Calu3 (cell line): ENCODE measurements at regions of chr7 and their contacts with region 1.

Region 1: DNA sequence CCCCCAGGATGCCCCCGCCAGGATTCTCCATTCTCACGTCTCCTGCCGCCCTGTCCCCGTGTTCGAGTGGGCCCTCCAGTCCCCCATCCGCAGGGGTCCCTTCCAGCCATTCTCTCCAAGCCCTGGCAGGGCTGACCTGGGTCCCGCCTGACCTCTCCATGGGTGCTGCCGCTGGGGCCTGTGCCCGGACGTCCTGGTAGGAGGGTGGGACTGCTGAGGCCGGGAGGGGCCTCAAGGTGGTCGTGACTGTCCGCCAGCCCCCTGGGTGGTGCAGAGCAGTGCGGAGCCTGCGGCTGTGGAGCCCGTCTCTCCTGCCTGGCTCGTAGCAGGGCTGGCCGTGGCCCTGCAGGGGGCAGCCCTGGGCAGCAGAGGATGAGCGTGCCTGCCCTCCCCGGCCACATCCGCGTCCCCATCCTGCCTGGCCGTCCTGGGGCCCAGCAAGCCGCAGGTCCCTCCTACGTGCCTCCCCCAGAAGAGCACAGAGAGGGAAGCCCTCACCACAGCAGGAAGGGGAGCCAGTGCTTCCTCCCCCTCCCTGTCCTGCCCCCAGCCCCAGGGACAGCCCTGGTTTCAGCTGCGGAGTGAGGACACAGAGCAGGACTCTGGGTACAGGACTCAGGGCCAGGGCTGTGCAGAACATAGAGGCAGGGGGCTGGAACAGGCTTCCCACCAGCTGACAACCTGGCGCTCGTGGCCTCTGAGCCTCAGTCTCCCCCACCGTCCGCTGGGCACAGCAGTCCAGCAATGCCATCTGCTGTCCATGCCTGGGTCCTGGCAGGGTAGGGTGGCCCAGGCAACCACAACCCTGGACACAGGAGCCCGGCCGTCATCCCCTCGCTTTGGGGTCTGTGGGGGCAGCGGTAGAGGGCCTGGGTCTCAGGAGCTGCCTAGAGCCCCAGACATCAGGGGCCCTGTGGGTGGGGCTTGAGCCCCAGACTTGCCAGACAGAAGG is 1.5 kb upstream of the GRIFIN start:
- DNase-seq: peak; percentile 92
- H3K4me3 Mint-ChIP-seq: no peak overlapping the region
- H3K27ac Mint-ChIP-seq: no peak overlapping the region
- H3K4me1 Mint-ChIP-seq: peaks cover 10% of the 10 kb centered on the region
- H3K27me3 Mint-ChIP-seq: peaks cover 44% of the 10 kb centered on the region
- CTCF ChIP-seq: peak; percentile 93

Region 2: DNA sequence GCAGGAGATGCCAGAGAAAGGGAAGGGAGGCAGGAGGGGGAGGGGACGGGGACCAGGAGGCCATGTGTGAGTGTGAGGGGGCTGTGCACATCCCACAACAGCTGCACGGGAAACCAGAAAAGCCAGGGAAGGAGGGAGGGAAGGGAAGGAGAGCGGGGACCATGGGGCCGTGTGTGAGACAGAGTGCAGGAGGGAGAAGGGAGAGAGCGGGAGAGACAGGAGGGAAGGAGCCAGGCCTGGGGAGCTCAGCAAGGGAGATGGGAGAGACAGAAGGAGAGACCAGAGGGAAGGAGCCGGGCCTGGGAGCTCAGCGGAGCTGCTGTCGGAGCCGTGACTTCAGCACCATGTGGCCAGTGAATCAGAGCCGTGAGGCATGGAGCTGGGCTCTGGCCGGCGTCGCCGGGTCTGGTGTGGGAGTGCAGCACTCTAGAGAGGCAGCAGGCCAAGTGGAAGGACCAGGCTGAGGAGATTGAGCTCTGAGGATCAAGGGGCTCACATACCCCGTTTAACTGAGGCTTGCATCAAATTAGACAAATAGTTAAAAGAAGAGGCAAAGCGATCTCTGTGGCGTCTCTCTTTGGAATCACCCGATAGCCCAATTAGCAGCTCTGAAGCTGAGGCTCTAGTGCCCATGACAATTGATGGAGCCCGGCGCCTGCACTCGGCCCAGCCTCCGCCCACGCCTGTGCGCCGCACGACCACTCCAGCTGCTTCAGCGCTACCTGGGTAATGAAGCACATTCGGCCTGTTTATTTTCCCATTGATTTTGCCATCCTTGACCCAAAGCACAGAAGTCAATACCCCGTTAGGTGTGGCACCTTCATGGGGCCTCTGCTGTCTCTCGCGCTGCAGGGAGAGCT is 395.4 kb before region 1 on chr7:
- CTCF ChIA-PET with region 1: no interaction called
- intact Hi-C with region 1: no loop called
- DNase-seq: no peak
- H3K4me3 Mint-ChIP-seq: no peak overlapping the region
- H3K27ac Mint-ChIP-seq: no peak overlapping the region
- H3K4me1 Mint-ChIP-seq: no peaks in the 10 kb centered on the region
- H3K27me3 Mint-ChIP-seq: no peaks in the 10 kb centered on the region
- CTCF ChIP-seq: no peak

Region 3: DNA sequence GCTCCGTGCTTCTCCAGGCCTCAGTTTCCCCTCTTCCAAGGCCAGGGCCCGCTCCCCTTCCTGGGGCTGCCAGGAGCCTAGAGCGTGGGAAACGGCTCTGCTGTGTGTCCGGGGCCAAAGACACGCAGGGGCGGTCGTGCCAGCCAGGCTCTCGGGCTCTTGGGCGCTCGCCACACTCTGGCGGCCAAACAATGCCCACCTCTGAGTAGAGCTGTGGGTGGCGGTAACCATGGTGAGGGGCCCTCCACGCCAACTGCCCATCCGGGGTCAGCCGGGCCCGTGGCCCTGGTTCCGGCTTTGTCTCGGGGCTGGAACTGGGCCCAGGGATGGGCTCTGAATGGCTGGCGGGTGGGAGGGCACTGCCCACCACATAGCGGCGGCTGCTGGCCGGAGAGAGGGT is 17.5 kb before region 1 on chr7:
- CTCF ChIA-PET with region 1: interaction called, 10 read pairs
- intact Hi-C with region 1: loop called (anchors 1 kb)
- DNase-seq: no peak
- H3K4me3 Mint-ChIP-seq: no peak overlapping the region
- H3K27ac Mint-ChIP-seq: no peak overlapping the region
- H3K4me1 Mint-ChIP-seq: no peaks in the 10 kb centered on the region
- H3K27me3 Mint-ChIP-seq: peaks cover 9% of the 10 kb centered on the region
- CTCF ChIP-seq: no peak

Region 4: DNA sequence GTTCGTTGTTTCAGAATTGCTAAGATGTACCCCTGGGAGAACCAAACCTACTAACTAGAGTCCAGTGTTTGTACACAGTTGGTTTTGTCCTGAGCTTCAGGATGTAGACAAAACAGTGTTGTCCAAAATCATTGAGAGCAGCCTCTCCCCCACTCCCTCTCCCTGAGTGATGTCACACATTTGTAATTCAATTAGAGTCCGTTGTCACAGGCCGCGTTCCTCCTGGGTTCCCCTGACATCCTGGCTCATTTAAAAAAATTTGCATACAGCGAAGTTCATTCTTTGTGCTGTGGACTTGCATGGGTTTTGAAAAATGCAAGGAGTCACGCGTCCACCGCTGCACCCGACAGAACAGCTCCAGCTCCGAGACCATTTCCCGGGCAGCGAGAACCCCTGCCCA is 11.8 kb before region 1 on chr7:
- CTCF ChIA-PET with region 1: interaction called, 10 read pairs
- intact Hi-C with region 1: loop called (anchors 1 kb)
- DNase-seq: no peak
- H3K4me3 Mint-ChIP-seq: no peak overlapping the region
- H3K27ac Mint-ChIP-seq: no peak overlapping the region
- H3K4me1 Mint-ChIP-seq: peaks cover 18% of the 10 kb centered on the region
- H3K27me3 Mint-ChIP-seq: peaks cover 30% of the 10 kb centered on the region
- CTCF ChIP-seq: no peak

Region 5: DNA sequence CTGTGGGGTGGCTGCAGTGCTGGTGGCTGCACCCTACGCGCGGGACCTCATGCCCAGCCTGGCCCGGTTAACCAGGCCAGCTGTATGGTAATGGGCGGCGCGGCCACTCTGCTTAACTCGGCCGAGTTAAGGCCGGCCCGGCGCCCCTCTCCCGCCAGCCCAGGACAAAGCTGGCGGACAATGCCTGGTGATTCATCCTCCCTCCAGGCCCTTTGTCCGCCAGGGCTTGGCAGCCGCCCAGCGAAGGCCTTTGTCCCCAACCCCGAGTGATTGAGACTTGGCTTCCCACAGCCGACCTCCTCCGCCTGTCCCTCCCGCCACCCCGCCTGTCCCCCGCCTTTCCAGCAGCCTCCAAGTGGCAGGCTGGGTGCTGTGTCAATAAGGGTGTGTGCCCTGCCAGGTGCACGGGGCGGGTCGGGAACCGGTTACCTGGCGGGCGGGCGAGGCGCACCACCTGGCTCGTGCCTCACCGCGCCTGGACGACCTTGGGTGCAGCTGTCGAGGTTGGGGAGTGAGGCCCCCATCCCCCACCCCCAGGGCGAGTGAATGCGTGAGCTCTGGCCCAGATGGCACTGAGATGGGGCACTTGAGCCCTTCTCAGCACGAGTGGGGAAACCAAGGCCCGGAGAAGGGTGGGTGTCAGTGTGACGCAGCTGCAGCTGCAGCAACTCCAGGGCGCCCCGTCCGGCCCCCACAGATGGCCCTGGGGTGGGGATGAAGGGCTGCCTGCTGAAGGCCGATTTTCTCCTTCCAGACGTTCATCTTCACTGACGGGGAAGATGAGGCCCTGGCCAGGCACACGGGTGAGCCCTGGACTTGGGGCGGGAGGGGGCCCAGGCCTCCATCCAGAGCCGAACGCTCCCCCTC is 46.5 kb after region 1 on chr7:
- CTCF ChIA-PET with region 1: interaction called, 7 read pairs
- intact Hi-C with region 1: loop called (anchors 5 kb)
- DNase-seq: peak; percentile 99
- H3K4me3 Mint-ChIP-seq: peak overlapping the region; percentile 99
- H3K27ac Mint-ChIP-seq: peak overlapping the region; percentile 77
- H3K4me1 Mint-ChIP-seq: peaks cover 46% of the 10 kb centered on the region
- H3K27me3 Mint-ChIP-seq: no peaks in the 10 kb centered on the region
- CTCF ChIP-seq: no peak

Region 6: GRCh38 chr7:2555121-2556052 is 77.7 kb after region 1 on chr7 and contains the start of gene BRAT1:
- CTCF ChIA-PET with region 1: interaction called, 3 read pairs
- intact Hi-C with region 1: loop called (anchors 5 kb)
- DNase-seq: peak; percentile 99
- H3K4me3 Mint-ChIP-seq: peak within 1 kb of the TSS; percentile 93
- H3K27ac Mint-ChIP-seq: peak within 1 kb of the TSS; percentile 93
- H3K4me1 Mint-ChIP-seq: peaks cover 38% of the 10 kb centered on the region
- H3K27me3 Mint-ChIP-seq: no peaks in the 10 kb centered on the region
- CTCF ChIP-seq: peak; percentile 71
- total RNA-seq, gene BRAT1: 56.2 and 59.6 TPM in 2 replicates

Region 7: DNA sequence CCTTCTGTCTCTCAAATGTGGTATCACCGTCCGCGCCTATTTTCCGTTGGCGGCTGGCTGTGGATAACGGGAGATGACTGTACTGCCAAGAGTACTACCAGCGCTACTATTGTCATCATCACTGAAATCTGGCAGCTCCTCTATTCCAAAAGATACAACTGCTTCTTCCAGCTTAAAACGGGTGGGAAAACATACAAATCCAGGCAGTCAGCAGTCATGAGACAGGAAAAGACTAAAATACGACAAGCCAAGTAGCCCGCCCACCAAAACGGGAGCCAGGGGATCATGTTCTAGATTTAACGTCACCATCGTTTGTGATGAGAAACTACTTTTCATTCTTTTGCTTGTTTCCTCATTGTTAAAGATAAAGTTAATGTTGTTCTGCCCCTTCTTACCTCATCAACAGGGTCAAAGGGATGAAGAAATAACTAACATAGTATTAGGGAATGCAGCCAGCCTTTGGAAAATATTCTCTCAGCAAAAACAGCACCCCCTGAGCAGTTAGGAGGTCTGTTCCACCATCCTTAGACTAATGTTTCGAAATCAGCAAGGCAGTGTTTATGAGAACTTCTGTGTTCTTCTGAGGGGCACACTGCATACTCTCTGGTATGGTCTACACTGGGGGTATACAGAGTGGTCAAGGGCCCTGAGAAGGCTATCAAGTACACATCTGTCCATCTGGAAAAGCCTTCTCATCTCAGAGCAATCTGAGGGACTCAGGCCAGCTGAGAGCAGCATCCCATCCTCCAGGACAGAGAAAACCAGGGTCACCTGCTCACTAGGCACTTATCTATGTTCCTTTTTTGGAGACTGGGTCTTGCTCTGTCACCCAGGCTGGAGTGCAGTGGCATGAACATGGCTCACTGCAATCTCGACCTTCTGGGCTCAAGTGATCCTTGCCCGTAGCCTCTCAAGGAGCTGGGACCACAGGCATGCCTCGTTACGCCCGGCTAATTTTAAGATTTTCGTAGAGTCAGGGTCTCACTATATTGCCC is 318.9 kb after region 1 on chr7:
- CTCF ChIA-PET with region 1: no interaction called
- intact Hi-C with region 1: no loop called
- DNase-seq: no peak
- H3K4me3 Mint-ChIP-seq: no peak overlapping the region
- H3K27ac Mint-ChIP-seq: no peak overlapping the region
- H3K4me1 Mint-ChIP-seq: peaks cover 29% of the 10 kb centered on the region
- H3K27me3 Mint-ChIP-seq: no peaks in the 10 kb centered on the region
- CTCF ChIP-seq: no peak